PC-9 (cell line): ENCODE measurements at regions of chr12 and their contacts with region 1.

Region 1: GRCh38 chr12:77010691-77011548 is 54.4 kb downstream of the E2F7 start:
- DNase-seq: peak; percentile 41 to 62
- H3K4me3 ChIP-seq: no peak overlapping the region
- H3K27ac ChIP-seq: no peak overlapping the region
- H3K4me1 ChIP-seq: no peaks in the 10 kb centered on the region
- H3K27me3 ChIP-seq: no peaks in the 10 kb centered on the region
- CTCF ChIP-seq: peak; percentile 87

Region 2: GRCh38 chr12:76790564-76791552 is 220.1 kb before region 1 on chr12:
- CTCF ChIA-PET with region 1: no interaction called
- POLR2A ChIA-PET with region 1: no interaction called
- intact Hi-C with region 1: loop called (anchors 5 kb)
- DNase-seq: no peak
- H3K4me3 ChIP-seq: no peak overlapping the region
- H3K27ac ChIP-seq: no peak overlapping the region
- H3K4me1 ChIP-seq: no peaks in the 10 kb centered on the region
- H3K27me3 ChIP-seq: no peaks in the 10 kb centered on the region
- CTCF ChIP-seq: peak; percentile 88

Region 3: DNA sequence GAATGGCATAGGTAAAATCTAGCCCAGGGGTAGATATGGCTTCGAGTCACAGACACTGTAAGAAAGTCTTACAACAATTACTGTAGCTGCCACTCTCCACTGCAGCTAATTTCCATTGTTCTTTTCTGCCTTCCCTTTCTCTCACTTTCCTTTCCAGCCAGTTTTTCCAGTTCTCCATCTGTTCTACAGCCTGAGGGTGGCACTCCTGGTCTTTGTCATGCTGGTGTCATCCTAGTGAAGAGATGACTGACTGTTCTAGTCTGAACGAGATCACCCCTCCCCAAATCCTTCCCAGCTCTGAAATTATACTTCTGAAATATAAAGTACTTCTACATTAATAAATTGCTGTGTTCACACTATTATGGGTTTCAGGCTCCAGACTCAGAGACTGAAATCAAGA is 57.9 kb before region 1 on chr12:
- CTCF ChIA-PET with region 1: no interaction called
- POLR2A ChIA-PET with region 1: no interaction called
- intact Hi-C with region 1: loop called (anchors 5 kb)
- DNase-seq: peak in 1 of 2 experiments; percentile 27
- H3K4me3 ChIP-seq: no peak overlapping the region
- H3K27ac ChIP-seq: no peak overlapping the region
- H3K4me1 ChIP-seq: no peaks in the 10 kb centered on the region
- H3K27me3 ChIP-seq: no peaks in the 10 kb centered on the region
- CTCF ChIP-seq: no peak